K562 (cell line): ENCODE measurements at regions of chr1 and their contacts with region 1.

Region 1: GRCh38 chr1:183995322-183996039 is 42.0 kb downstream of the COLGALT2 start:
- DNase-seq: peak in 1 of 4 experiments; percentile 48
- ATAC-seq: peak; percentile 8; the same call in 1 of the 3 replicates
- H3K4me3 ChIP-seq: no peak overlapping the region
- H3K27ac ChIP-seq: peak overlapping the region; percentile 51; the same call in 1 of the 3 replicates
- H3K4me1 ChIP-seq: peaks cover 3 to 54% of the 10 kb centered on the region in 2 experiments; a peak in 4 of 5 replicates
- H3K27me3 ChIP-seq: no peaks in the 10 kb centered on the region
- CTCF ChIP-seq: no peak
- EP300 ChIP-seq: no peak
- POLR2A ChIP-seq: no peak
- RAD21 ChIP-seq: no peak

Region 2: DNA sequence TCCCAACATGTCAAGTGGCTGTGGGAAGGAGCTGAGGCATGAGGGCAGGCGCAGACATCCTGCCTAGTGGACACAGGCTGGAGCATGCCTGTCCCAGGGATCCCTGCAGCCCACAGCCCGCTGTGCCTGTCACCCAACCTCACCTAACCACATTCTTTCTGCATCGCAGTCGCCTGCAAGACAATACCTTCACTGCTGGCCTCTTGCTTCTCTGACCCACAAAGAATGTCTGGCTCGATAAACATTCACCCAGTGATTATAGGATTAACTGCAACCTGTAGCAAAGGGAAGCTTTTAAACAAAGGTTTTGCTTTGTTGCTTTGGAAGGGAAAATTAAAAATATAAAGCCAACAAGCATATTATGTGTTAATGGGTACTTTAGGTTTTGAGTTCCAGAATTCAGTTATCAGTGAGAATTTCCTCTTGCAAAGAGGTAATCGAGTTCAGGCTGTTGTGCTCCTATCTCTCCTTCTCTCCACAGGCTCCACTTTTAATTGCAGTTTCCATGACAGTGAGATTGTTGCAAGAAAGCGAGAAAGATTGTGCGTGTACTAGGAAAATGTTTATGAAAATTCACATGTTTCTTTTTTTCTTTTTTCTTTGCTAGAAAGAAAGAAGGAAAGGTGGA is 1894.0 kb before region 1 on chr1:
- CTCF ChIA-PET with region 1: no interaction called
- POLR2A ChIA-PET with region 1: no interaction called
- in situ Hi-C with region 1: loop called (anchors 10 kb)
- intact Hi-C with region 1: no loop called
- DNase-seq: no peak
- ATAC-seq: no peak
- H3K4me3 ChIP-seq: no peak overlapping the region
- H3K27ac ChIP-seq: no peak overlapping the region
- H3K4me1 ChIP-seq: no peaks in the 10 kb centered on the region
- H3K27me3 ChIP-seq: peaks cover 5 to 17% of the 10 kb centered on the region in 2 experiments; a peak in 3 of 5 replicates
- CTCF ChIP-seq: no peak
- EP300 ChIP-seq: no peak
- POLR2A ChIP-seq: no peak
- RAD21 ChIP-seq: no peak

Region 3: DNA sequence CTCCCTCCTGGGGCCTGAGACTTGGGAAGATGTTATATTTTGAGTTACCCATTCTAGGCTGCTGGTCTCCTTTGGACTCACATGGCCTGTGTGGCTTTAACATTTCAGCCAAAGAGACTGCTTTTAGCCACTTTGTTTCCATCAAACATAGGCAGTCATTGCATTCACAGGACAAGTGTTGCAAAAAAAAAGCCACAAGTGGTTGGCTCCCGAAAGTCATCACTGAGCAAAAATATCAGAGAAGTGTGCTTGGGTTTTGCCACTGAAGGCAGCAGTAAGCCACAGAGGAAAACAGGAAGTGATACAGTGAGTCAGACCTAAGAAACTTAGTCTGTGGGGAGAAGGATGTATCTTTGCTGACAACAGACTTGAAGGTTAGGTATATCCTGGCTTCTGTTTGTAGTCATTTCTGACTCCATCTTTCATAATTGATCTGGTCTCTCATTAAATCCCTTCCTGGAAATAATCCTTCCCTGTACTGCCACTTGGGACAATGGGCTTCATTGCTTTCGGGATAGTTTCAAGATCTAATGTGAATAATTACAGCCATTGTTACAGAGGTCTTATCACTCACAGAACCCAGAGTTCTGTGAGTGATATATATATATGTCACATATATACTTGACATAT is 38.8 kb before region 1 on chr1:
- CTCF ChIA-PET with region 1: no interaction called
- POLR2A ChIA-PET with region 1: interaction called, 3 read pairs
- in situ Hi-C with region 1: no loop called
- intact Hi-C with region 1: loop called (anchors 2 kb)
- DNase-seq: peak in 2 of 4 experiments; percentile 69 to 71
- ATAC-seq: peak; percentile 94
- H3K4me3 ChIP-seq: no peak overlapping the region
- H3K27ac ChIP-seq: peak overlapping the region; percentile 38; the same call in 1 of the 3 replicates
- H3K4me1 ChIP-seq: peaks cover 0 to 14% of the 10 kb centered on the region in 2 experiments; a peak in 3 of 5 replicates
- H3K27me3 ChIP-seq: no peaks in the 10 kb centered on the region
- CTCF ChIP-seq: peak; percentile 46 to 74 (median 57); a peak in 5 of 6 replicates
- EP300 ChIP-seq: peak; percentile 36; the same call in 1 of the 2 replicates
- POLR2A ChIP-seq: no peak
- RAD21 ChIP-seq: peak; percentile 78 to 79

Region 4: DNA sequence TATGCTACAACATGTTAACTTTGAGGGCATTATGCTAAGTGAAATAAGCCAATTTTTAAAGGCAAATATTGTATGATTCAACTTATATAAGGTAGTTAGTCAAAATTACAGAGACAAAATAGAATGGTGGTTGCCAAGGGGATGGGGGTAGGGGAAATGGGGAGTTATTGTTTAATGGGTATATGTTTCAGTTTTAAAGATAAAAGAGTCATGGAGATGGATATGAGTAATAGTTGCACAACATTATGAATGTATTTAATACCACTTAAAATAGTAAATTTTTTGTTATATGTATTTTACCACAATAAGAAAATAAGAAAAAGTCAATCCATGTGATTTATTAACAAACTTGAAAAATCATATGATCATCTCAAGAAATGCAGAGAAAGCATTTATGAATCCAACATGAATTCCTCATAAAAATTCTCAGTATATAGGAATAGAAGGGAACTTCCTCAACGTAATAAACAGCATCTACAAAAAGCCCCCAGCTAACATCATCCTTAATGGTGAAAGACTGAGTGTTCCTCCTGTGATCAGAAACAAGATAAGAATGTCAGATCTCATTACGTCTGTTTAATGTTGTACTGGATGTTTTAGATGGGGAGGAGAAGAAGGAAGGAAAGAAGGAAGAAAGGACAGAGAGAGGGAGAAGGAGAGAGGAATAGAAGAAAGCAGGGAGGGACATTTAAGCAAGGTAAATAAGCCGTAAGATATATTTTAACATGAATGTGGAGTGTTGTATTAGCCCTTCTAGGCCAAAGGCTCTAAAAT is 49.3 kb after region 1 on chr1:
- CTCF ChIA-PET with region 1: no interaction called
- POLR2A ChIA-PET with region 1: no interaction called
- in situ Hi-C with region 1: no loop called
- intact Hi-C with region 1: no loop called
- DNase-seq: no peak
- ATAC-seq: 0 out of 3 replicates have a peak, but pooled peaks have one; percentile 19
- H3K4me3 ChIP-seq: no peak overlapping the region
- H3K27ac ChIP-seq: no peak overlapping the region
- H3K4me1 ChIP-seq: peaks cover 0 to 3% of the 10 kb centered on the region in 2 experiments; a peak in 1 of 5 replicates
- H3K27me3 ChIP-seq: no peaks in the 10 kb centered on the region
- CTCF ChIP-seq: no peak
- EP300 ChIP-seq: no peak
- POLR2A ChIP-seq: no peak
- RAD21 ChIP-seq: no peak